AG04450 (cell line): ENCODE measurements at regions of chr19 and their contacts with region 1.

Region 1: GRCh38 chr19:32924203-32924930 is 47.4 kb downstream of the CEP89 start:
- DNase-seq: peak; percentile 8
- H3K4me3 ChIP-seq: no peak overlapping the region
- H3K27ac ChIP-seq: no peak overlapping the region
- H3K27me3 ChIP-seq: no peaks in the 10 kb centered on the region
- CTCF ChIP-seq: no peak

Region 2: GRCh38 chr19:32691291-32691951 is 232.9 kb before region 1 on chr19 and contains the start of gene NUDT19:
- CTCF ChIA-PET with region 1: interaction called, 11 read pairs
- POLR2A ChIA-PET with region 1: no interaction called
- DNase-seq: peak; percentile 13
- H3K4me3 ChIP-seq: peak within 1 kb of the TSS; percentile 67
- H3K27ac ChIP-seq: peak within 1 kb of the TSS; percentile 61
- H3K27me3 ChIP-seq: no peaks in the 10 kb centered on the region
- CTCF ChIP-seq: no peak
- polyA plus RNA-seq, gene NUDT19: 4.8 and 5.3 TPM in 2 replicates

Region 3: GRCh38 chr19:32988724-32989123 is 64.4 kb after region 1 on chr19:
- CTCF ChIA-PET with region 1: no interaction called
- POLR2A ChIA-PET with region 1: no interaction called
- DNase-seq: no peak
- H3K4me3 ChIP-seq: no peak overlapping the region
- H3K27ac ChIP-seq: no peak overlapping the region
- H3K27me3 ChIP-seq: no peaks in the 10 kb centered on the region
- CTCF ChIP-seq: no peak

Region 4: GRCh38 chr19:33005420-33005819 is 81.1 kb after region 1 on chr19:
- CTCF ChIA-PET with region 1: no interaction called
- POLR2A ChIA-PET with region 1: no interaction called
- DNase-seq: no peak
- H3K4me3 ChIP-seq: no peak overlapping the region
- H3K27ac ChIP-seq: no peak overlapping the region
- H3K27me3 ChIP-seq: no peaks in the 10 kb centered on the region
- CTCF ChIP-seq: no peak

Region 5: GRCh38 chr19:33208904-33209849 is 284.8 kb after region 1 on chr19:
- CTCF ChIA-PET with region 1: interaction called, 13 read pairs
- POLR2A ChIA-PET with region 1: no interaction called
- DNase-seq: no peak
- H3K4me3 ChIP-seq: no peak overlapping the region
- H3K27ac ChIP-seq: no peak overlapping the region
- H3K27me3 ChIP-seq: no peaks in the 10 kb centered on the region
- CTCF ChIP-seq: no peak